ENCODE measurements at regions of chrX and their contacts with region 1.

Region 1: GRCh38 chrX:55160685-55161552 is 59.2 kb upstream of the PAGE5 start:
- DNase-seq: peak; percentile 84 to 93 (median 90)
- ATAC-seq: peak; percentile 91
- H3K4me3 ChIP-seq: peak overlapping the region; percentile 77
- H3K4me3 Mint-ChIP-seq: peak overlapping the region; percentile 90
- H3K27ac ChIP-seq: peak overlapping the region; percentile 79 to 94
- H3K27ac Mint-ChIP-seq: peak overlapping the region; percentile 88
- H3K4me1 ChIP-seq: peaks cover 8% of the 10 kb centered on the region
- H3K4me1 Mint-ChIP-seq: peaks cover 17% of the 10 kb centered on the region
- H3K27me3 ChIP-seq: no peaks in the 10 kb centered on the region
- H3K27me3 Mint-ChIP-seq: no peaks in the 10 kb centered on the region
- CTCF ChIP-seq: peak; percentile 64

Region 2: GRCh38 chrX:53683556-53684414 is 1477.1 kb before region 1 on chrX:
- CTCF ChIA-PET with region 1: no interaction called
- POLR2A ChIA-PET with region 1: no interaction called
- intact Hi-C with region 1: loop called in 1 of 2 experiments (anchors 10 kb)
- DNase-seq: peak; percentile 77 to 98 (median 86)
- ATAC-seq: peak; percentile 78
- H3K4me3 ChIP-seq: peak overlapping the region; percentile 90
- H3K4me3 Mint-ChIP-seq: peak overlapping the region; percentile 95
- H3K27ac ChIP-seq: peak overlapping the region; percentile 75 to 98
- H3K27ac Mint-ChIP-seq: peak overlapping the region; percentile 99
- H3K4me1 ChIP-seq: peaks cover 18% of the 10 kb centered on the region
- H3K4me1 Mint-ChIP-seq: peaks cover 63% of the 10 kb centered on the region
- H3K27me3 ChIP-seq: no peaks in the 10 kb centered on the region
- H3K27me3 Mint-ChIP-seq: no peaks in the 10 kb centered on the region
- CTCF ChIP-seq: no peak

Region 3: GRCh38 chrX:54529552-54530357 is 631.2 kb before region 1 on chrX and contains the start of gene GNL3L:
- CTCF ChIA-PET with region 1: no interaction called
- POLR2A ChIA-PET with region 1: no interaction called
- intact Hi-C with region 1: loop called in 1 of 2 experiments (anchors 10 kb)
- DNase-seq: peak; percentile 56 to 90 (median 79)
- ATAC-seq: peak; percentile 84
- H3K4me3 ChIP-seq: peak within 1 kb of the TSS; percentile 76
- H3K4me3 Mint-ChIP-seq: peak within 1 kb of the TSS; percentile 99
- H3K27ac ChIP-seq: peak within 1 kb of the TSS; percentile 64 to 90
- H3K27ac Mint-ChIP-seq: peak within 1 kb of the TSS; percentile 94
- H3K4me1 ChIP-seq: peaks cover 38% of the 10 kb centered on the region
- H3K4me1 Mint-ChIP-seq: peaks cover 44% of the 10 kb centered on the region
- H3K27me3 ChIP-seq: no peaks in the 10 kb centered on the region
- H3K27me3 Mint-ChIP-seq: no peaks in the 10 kb centered on the region
- CTCF ChIP-seq: no peak
- total RNA-seq, gene GNL3L: 21.5 to 22.8 TPM

Region 4: DNA sequence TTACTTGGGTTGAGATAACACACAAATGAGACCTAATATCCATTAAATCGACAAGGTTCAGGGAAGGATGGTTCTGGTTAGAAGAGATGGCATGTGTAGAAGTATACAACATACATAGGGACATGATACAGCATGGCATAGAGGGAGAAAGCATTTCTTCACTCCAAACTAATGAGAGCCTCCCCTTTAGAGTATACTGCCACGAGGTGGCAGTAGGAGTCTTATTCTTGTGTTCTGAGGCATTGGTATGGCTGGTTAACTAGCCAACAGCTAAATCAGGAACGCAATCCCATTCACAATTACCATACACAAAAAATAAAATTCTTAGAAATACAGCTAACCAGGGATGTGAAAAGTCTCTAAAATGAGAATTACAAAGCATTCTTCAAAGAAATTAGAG is 269.3 kb before region 1 on chrX:
- CTCF ChIA-PET with region 1: no interaction called
- POLR2A ChIA-PET with region 1: no interaction called
- intact Hi-C with region 1: loop called (anchors 1 kb)
- DNase-seq: peak in 11 of 14 experiments; percentile 6 to 68 (median 31)
- ATAC-seq: peak; percentile 84
- H3K4me3 ChIP-seq: no peak overlapping the region
- H3K4me3 Mint-ChIP-seq: no peak overlapping the region
- H3K27ac ChIP-seq: no peak overlapping the region
- H3K27ac Mint-ChIP-seq: no peak overlapping the region
- H3K4me1 ChIP-seq: no peaks in the 10 kb centered on the region
- H3K4me1 Mint-ChIP-seq: peaks cover 4% of the 10 kb centered on the region
- H3K27me3 ChIP-seq: peaks cover 0 to 3% of the 10 kb centered on the region in 2 experiments
- H3K27me3 Mint-ChIP-seq: no peaks in the 10 kb centered on the region
- CTCF ChIP-seq: peak; percentile 57

Region 5: DNA sequence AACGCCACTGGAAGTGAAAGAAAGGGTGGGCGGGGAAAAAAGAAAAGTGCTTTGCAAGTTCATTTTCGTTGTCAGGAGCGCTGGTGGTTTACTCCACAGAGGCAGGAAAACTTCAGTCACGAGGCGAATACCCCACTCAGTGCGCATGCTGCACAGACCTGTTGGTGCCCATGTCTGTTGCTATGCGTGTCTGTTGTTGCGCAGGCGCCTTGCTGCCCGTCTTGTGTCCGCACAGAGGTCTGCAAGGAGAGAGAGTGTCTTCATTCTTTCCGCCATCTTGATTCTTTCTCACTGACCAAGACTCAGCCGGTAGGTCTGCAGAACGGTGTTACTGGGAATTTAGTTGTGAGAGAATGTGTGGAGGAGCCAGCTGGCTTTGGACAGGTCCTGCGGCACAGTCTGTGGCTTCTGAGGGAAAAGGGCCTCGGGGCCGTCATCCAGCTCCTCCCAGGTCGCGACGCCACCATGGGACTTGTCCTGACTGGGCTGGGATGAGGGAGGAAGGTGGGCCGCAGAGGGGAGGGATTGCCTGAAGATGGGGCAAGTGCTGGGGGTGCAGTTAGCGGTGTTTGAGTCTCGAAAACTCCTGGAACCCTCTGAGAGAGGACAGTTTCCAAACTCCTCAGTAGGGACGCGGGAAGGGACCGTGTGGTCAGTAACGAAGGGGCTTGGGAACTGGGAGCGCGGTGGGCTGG is 72.0 kb before region 1 on chrX and contains the start of gene PAGE2:
- CTCF ChIA-PET with region 1: no interaction called
- POLR2A ChIA-PET with region 1: no interaction called
- intact Hi-C with region 1: no loop called
- DNase-seq: no peak
- ATAC-seq: no peak
- H3K4me3 ChIP-seq: no peak within 1 kb of the TSS
- H3K4me3 Mint-ChIP-seq: no peak within 1 kb of the TSS
- H3K27ac ChIP-seq: no peak within 1 kb of the TSS
- H3K27ac Mint-ChIP-seq: no peak within 1 kb of the TSS
- H3K4me1 ChIP-seq: no peaks in the 10 kb centered on the region
- H3K4me1 Mint-ChIP-seq: no peaks in the 10 kb centered on the region
- H3K27me3 ChIP-seq: no peaks in the 10 kb centered on the region
- H3K27me3 Mint-ChIP-seq: no peaks in the 10 kb centered on the region
- CTCF ChIP-seq: no peak
- total RNA-seq, gene PAGE2: not detected

Region 6: DNA sequence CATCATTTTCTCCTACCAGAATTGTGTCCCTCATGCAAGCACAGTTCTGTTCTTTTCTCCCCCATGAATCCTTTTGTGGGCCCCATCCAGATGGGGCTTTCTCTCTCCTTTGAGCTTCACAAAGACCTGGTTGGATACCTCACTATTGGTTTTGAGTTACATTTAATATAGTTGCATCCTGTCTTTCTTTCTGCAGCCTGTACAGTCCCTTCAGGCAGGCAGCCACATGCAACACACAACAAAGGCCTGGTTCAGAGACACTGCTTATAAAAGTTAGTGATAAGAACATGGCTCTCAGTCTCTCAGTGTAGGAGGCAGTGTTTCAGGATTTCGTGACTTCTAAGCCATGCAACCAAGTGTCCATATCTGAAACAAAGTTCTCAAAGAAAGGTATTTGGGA is 174.4 kb after region 1 on chrX:
- CTCF ChIA-PET with region 1: no interaction called
- POLR2A ChIA-PET with region 1: no interaction called
- intact Hi-C with region 1: loop called (anchors 2 to 10 kb)
- DNase-seq: no peak
- ATAC-seq: no peak
- H3K4me3 ChIP-seq: no peak overlapping the region
- H3K4me3 Mint-ChIP-seq: no peak overlapping the region
- H3K27ac ChIP-seq: no peak overlapping the region
- H3K27ac Mint-ChIP-seq: peak overlapping the region; percentile 39
- H3K4me1 ChIP-seq: no peaks in the 10 kb centered on the region
- H3K4me1 Mint-ChIP-seq: peaks cover 9% of the 10 kb centered on the region
- H3K27me3 ChIP-seq: no peaks in the 10 kb centered on the region
- H3K27me3 Mint-ChIP-seq: no peaks in the 10 kb centered on the region
- CTCF ChIP-seq: no peak

Region 7: DNA sequence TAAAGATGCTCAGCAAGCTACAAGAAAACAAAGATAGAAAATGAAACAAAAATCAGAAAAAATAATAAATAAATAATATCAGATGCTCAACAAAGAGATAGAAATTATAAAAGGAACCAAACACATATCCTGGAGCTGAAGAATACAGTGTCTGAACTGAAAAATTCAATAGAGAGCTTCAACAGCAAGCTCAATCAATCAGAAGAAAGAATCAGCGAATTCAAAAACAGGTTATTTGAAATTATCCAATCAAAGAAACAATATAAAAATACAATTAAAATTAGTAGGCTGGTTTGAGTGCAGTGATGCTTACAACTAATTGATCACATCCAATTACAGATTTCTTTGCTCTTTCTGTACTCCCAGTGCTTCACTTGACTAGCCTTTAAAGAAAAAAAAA is 421.5 kb after region 1 on chrX:
- CTCF ChIA-PET with region 1: no interaction called
- POLR2A ChIA-PET with region 1: no interaction called
- intact Hi-C with region 1: no loop called
- DNase-seq: no peak
- ATAC-seq: no peak
- H3K4me3 ChIP-seq: no peak overlapping the region
- H3K4me3 Mint-ChIP-seq: no peak overlapping the region
- H3K27ac ChIP-seq: no peak overlapping the region
- H3K27ac Mint-ChIP-seq: no peak overlapping the region
- H3K4me1 ChIP-seq: no peaks in the 10 kb centered on the region
- H3K4me1 Mint-ChIP-seq: no peaks in the 10 kb centered on the region
- H3K27me3 ChIP-seq: no peaks in the 10 kb centered on the region
- H3K27me3 Mint-ChIP-seq: no peaks in the 10 kb centered on the region
- CTCF ChIP-seq: no peak

Region 8: GRCh38 chrX:55778321-55778720 is 617.4 kb after region 1 on chrX:
- CTCF ChIA-PET with region 1: no interaction called
- POLR2A ChIA-PET with region 1: no interaction called
- intact Hi-C with region 1: no loop called
- DNase-seq: no peak
- ATAC-seq: no peak
- H3K4me3 ChIP-seq: no peak overlapping the region
- H3K4me3 Mint-ChIP-seq: no peak overlapping the region
- H3K27ac ChIP-seq: no peak overlapping the region
- H3K27ac Mint-ChIP-seq: no peak overlapping the region
- H3K4me1 ChIP-seq: no peaks in the 10 kb centered on the region
- H3K4me1 Mint-ChIP-seq: peaks cover 4% of the 10 kb centered on the region
- H3K27me3 ChIP-seq: no peaks in the 10 kb centered on the region
- H3K27me3 Mint-ChIP-seq: no peaks in the 10 kb centered on the region
- CTCF ChIP-seq: no peak

Region 9: DNA sequence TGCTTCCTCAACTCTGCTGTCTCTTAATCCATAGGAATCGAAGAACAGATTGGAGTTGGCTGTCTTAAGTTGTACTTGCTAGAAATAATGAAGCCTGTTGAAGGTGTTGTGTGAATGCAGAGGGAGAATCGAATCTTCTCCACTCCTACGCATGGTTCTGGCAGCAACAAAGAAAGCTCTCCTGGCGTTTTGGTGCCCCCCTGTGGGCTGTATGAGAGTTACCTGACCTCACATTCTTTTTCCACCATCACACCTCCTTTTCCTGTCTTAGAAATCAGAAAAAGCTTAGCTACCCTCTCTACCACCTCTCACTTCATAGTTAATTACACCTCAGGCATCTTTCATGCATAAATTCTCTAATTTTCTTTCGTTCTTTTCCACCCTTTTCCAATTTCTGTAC is 1087.6 kb after region 1 on chrX:
- CTCF ChIA-PET with region 1: no interaction called
- POLR2A ChIA-PET with region 1: no interaction called
- intact Hi-C with region 1: loop called in 1 of 2 experiments (anchors 10 kb)
- DNase-seq: peak; percentile 21 to 74 (median 44)
- ATAC-seq: peak; percentile 78
- H3K4me3 ChIP-seq: no peak overlapping the region
- H3K4me3 Mint-ChIP-seq: no peak overlapping the region
- H3K27ac ChIP-seq: no peak overlapping the region
- H3K27ac Mint-ChIP-seq: no peak overlapping the region
- H3K4me1 ChIP-seq: no peaks in the 10 kb centered on the region
- H3K4me1 Mint-ChIP-seq: peaks cover 11% of the 10 kb centered on the region
- H3K27me3 ChIP-seq: no peaks in the 10 kb centered on the region
- H3K27me3 Mint-ChIP-seq: no peaks in the 10 kb centered on the region
- CTCF ChIP-seq: peak; percentile 64